Activated B cell treated with CpG ODN at 0.5 μM for 24 hours (primary cell): ENCODE measurements at regions of chr9 and their contacts with region 1.

Region 1: DNA sequence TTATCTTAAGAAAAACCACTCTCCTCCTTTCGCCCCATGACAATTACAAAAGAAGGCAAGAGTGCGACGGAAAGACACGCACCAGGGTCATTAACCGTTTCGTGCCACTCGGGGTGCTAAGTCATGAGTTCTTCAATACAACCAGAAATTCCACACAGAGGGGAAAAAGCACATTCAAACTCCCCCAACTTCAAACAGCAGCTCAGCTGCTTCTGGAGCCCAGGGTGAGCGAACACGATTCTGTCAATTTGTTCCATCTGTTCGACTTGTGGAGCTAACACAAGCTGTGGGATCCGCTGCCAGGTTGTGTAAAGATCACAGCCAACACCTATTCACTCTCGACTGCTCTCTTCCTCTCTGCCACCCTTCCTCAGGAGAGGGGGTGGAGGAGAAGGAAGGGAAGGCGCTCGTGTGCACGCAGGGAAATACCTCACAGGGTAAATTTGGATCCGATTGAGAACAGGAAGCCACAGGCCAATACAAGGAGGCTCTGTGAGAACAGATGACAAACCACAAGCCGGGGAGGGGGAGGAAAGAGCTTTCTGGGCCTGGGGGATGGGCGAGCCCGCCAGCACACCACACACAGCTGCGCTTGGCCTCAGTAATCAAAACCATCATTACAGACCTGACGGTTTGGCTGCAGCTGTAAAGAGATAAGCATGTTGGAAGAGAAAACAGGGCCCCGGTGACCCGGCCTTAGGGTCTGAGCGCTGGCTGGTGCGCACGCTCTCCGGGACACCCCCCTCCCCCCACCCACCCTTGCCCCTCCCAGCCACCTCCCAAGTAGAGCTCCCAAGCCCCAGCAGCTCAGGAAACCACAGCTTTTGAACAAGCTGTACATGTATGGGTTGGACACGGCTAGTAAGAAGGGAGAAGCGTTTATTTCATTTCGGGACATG is 54.3 kb downstream of the PTCH1 start:
- DNase-seq: peak; percentile 47
- ATAC-seq: peak; percentile 95
- H3K4me3 Mint-ChIP-seq: peak overlapping the region; percentile 79
- H3K27ac Mint-ChIP-seq: peak overlapping the region; percentile 43
- H3K4me1 Mint-ChIP-seq: peaks cover 25% of the 10 kb centered on the region
- H3K27me3 Mint-ChIP-seq: peaks cover 33% of the 10 kb centered on the region
- CTCF ChIP-seq: no peak

Region 2: DNA sequence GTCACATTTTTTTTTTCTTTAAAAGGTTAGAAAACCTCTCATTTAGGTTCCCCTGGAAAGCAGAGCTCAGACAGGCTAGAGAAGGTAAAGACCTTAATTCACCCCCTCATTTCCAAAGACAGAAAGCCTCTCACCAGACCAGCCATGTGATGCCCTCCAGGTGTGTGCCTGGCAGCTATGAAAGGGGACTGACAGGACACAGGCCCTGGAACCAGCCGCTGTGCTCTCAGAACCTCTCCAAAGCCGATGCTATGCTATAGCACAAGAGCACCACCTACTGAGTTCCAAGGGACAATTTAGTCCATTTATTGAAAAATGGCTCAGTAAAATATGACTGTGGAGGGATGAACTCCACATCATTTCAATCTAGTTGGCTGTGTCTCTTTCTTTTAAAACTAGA is 193.8 kb before region 1 on chr9:
- CTCF ChIA-PET with region 1: no interaction called
- POLR2A ChIA-PET with region 1: no interaction called
- intact Hi-C with region 1: no loop called
- DNase-seq: no peak
- ATAC-seq: no peak
- H3K4me3 Mint-ChIP-seq: no peak overlapping the region
- H3K27ac Mint-ChIP-seq: no peak overlapping the region
- H3K4me1 Mint-ChIP-seq: peaks cover 27% of the 10 kb centered on the region
- H3K27me3 Mint-ChIP-seq: no peaks in the 10 kb centered on the region
- CTCF ChIP-seq: no peak

Region 3: DNA sequence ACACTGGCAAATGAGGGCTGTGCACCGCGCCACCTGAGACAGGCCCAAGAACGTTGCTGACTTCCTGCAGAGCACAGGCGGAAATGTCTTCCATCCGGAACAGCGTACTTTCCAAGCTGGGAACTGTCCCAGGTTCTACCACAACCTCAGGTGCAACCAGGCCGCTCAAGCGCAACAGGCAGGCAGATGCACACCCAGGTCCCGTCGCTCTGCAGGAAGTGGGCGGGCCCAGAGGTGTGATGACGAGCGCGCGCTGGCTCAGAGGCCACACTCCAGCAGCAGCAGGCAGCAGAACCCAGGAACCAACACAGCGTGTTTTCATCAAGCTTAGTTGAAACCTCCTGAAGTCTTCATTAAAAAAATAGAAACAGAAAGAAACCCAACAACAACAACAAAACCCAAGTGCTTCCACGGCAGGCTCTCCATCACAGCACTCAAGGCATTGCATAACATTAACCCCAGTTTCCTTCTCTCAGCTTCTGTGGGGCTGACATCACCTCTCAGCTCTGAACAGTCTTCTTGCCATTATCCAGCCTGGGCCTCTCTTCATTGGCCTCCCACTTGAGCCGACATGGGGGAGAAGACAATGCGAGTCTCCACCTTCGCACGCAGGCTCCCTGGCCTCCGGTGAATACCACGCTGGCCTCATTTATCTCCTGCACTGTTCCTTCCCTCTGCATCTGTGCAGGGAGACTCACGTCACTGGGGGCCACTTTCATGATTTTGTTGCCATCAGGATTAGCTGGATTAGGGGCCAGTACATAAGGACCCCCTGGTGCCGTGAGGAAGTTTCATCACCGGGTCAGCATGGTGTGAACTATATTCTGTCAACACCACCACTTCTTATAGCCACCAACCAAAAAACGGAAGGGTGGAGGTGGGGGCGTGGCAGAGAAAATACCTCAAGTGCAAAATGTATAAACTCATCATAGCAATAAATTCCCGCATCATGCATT is 32.2 kb after region 1 on chr9:
- CTCF ChIA-PET with region 1: no interaction called
- POLR2A ChIA-PET with region 1: interaction called, 5 read pairs
- intact Hi-C with region 1: loop called (anchors 1 kb)
- DNase-seq: peak; percentile 46
- ATAC-seq: peak; percentile 90
- H3K4me3 Mint-ChIP-seq: peak overlapping the region; percentile 76
- H3K27ac Mint-ChIP-seq: peak overlapping the region; percentile 85
- H3K4me1 Mint-ChIP-seq: peaks cover 19% of the 10 kb centered on the region
- H3K27me3 Mint-ChIP-seq: peaks cover 8% of the 10 kb centered on the region
- CTCF ChIP-seq: no peak